Naive thymus-derived CD4-positive, alpha-beta T cell (primary cell): ENCODE measurements at regions of chr1 and their contacts with region 1.

Region 1: DNA sequence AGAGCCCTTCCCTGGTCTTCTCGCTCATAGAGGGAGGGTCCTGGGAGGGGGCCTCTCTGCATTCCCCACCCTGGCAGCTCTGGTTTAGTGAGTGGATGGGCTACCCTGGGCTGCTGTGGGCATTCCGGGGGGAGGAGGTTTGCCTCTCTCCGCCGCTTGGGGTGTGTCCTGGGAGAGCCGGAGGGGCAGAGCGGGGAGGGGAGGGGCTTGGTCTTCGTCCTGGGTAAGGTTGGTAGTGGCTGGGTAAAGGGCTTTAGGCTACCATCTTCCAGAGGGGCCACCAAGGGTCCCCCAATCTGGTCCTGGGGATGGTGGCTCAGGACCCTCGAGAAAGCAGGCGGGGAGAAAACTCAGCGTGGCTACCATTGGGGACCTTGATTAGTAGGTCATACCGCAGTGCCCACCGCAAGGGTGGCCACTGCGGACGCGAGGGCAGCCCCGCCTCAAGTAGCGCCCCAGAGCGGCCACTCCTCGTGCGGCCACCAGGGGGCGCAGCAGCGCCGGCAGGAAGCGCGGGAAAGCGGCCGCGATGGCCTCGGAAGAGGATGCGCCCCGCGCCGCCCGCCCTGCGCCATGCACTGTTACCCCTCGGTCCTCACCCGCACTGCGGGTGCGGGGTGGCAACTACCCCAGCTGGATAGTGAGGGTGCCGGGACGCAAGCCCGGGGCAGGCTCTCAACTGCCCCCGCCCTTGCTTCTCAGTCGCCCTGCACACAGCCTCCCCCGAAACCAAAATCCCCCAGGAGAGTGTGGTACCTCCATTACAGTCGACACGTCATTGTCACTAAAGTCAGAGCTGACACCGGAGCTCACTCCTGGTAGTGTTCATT is 44.1 kb upstream of the SLC25A33 start:
- DNase-seq: peak; percentile 30 to 80 (median 69)
- ATAC-seq: peak; percentile 86
- H3K4me3 ChIP-seq: peak overlapping the region; percentile 40
- H3K4me3 Mint-ChIP-seq: peak overlapping the region; percentile 33 to 78 (median 72)
- H3K27ac ChIP-seq: no peak overlapping the region
- H3K27ac Mint-ChIP-seq: peak overlapping the region in 1 of 9 donors; percentile 65
- H3K4me1 ChIP-seq: peaks cover 0 to 4% of the 10 kb centered on the region in 2 donors
- H3K4me1 Mint-ChIP-seq: peaks cover 0 to 11% (median 4%) of the 10 kb centered on the region in 7 donors
- H3K27me3 ChIP-seq: no peaks in the 10 kb centered on the region
- H3K27me3 Mint-ChIP-seq: peaks cover 0 to 35% (median 0%) of the 10 kb centered on the region in 5 donors

Region 2: GRCh38 chr1:9145021-9145668 is 350.0 kb before region 1 on chr1:
- CTCF ChIA-PET with region 1: no interaction called
- POLR2A ChIA-PET with region 1: no interaction called
- intact Hi-C with region 1: loop called in 1 of 2 experiments (anchors 1 kb)
- DNase-seq: no peak
- ATAC-seq: no peak
- H3K4me3 ChIP-seq: no peak overlapping the region
- H3K4me3 Mint-ChIP-seq: no peak overlapping the region
- H3K27ac ChIP-seq: no peak overlapping the region
- H3K27ac Mint-ChIP-seq: no peak overlapping the region
- H3K4me1 ChIP-seq: no peaks in the 10 kb centered on the region
- H3K4me1 Mint-ChIP-seq: peaks cover 0 to 7% (median 4%) of the 10 kb centered on the region in 7 donors
- H3K27me3 ChIP-seq: no peaks in the 10 kb centered on the region
- H3K27me3 Mint-ChIP-seq: no peaks in the 10 kb centered on the region

Region 3: DNA sequence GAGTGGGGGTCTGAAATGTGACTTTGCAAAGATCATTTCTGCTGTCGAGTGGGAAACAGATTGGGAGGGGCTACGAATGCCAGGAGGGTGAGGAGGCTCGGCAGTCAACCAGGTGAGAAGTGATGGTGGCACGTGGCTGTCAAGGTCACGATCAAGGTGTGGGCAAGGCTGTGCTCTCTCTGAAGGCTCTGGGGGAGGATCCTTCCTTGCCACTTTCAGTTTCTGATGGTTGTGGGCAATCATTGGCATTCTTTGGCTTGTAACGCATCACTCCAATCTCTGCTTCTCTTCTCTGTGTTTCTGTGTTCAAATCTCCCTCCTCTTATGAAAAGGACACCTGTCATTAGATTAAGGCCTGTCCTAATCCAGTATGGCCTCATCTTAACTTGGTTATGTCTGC is 208.6 kb before region 1 on chr1:
- CTCF ChIA-PET with region 1: interaction called, 45 read pairs
- POLR2A ChIA-PET with region 1: interaction called, 4 read pairs
- intact Hi-C with region 1: loop called (anchors 1 kb)
- DNase-seq: no peak
- ATAC-seq: no peak
- H3K4me3 ChIP-seq: no peak overlapping the region
- H3K4me3 Mint-ChIP-seq: no peak overlapping the region
- H3K27ac ChIP-seq: no peak overlapping the region
- H3K27ac Mint-ChIP-seq: peak overlapping the region in 2 of 9 donors; percentile 2 to 21
- H3K4me1 ChIP-seq: peaks cover 19 to 24% of the 10 kb centered on the region in 2 donors
- H3K4me1 Mint-ChIP-seq: peaks cover 6 to 48% (median 39%) of the 10 kb centered on the region in 7 donors
- H3K27me3 ChIP-seq: no peaks in the 10 kb centered on the region
- H3K27me3 Mint-ChIP-seq: no peaks in the 10 kb centered on the region

Region 4: GRCh38 chr1:9539165-9539828 is 44.2 kb after region 1 on chr1 and contains the start of gene SLC25A33:
- CTCF ChIA-PET with region 1: interaction called, 3 read pairs
- POLR2A ChIA-PET with region 1: no interaction called
- intact Hi-C with region 1: loop called in 1 of 2 experiments (anchors 1 kb)
- DNase-seq: peak; percentile 92 to 99 (median 95)
- ATAC-seq: peak; percentile 99
- H3K4me3 ChIP-seq: peak within 1 kb of the TSS; percentile 58
- H3K4me3 Mint-ChIP-seq: peak within 1 kb of the TSS; percentile 86 to 93 (median 90)
- H3K27ac ChIP-seq: peak within 1 kb of the TSS; percentile 73
- H3K27ac Mint-ChIP-seq: peak within 1 kb of the TSS; percentile 85 to 97 (median 91)
- H3K4me1 ChIP-seq: peaks cover 5 to 8% of the 10 kb centered on the region in 2 donors
- H3K4me1 Mint-ChIP-seq: peaks cover 18 to 38% (median 31%) of the 10 kb centered on the region in 7 donors
- H3K27me3 ChIP-seq: no peaks in the 10 kb centered on the region
- H3K27me3 Mint-ChIP-seq: no peaks in the 10 kb centered on the region
- total RNA-seq, gene SLC25A33: 2.5 to 5.8 (median 3.9) TPM

Region 5: GRCh38 chr1:9573723-9574122 is 78.6 kb after region 1 on chr1:
- CTCF ChIA-PET with region 1: interaction called, 34 read pairs
- POLR2A ChIA-PET with region 1: no interaction called
- intact Hi-C with region 1: loop called (anchors 1 kb)
- DNase-seq: peak in 3 of 9 donors; percentile 29 to 44 (median 33)
- ATAC-seq: no peak
- H3K4me3 ChIP-seq: no peak overlapping the region
- H3K4me3 Mint-ChIP-seq: no peak overlapping the region
- H3K27ac ChIP-seq: no peak overlapping the region
- H3K27ac Mint-ChIP-seq: peak overlapping the region in 2 of 9 donors; percentile 23 to 36
- H3K4me1 ChIP-seq: no peaks in the 10 kb centered on the region
- H3K4me1 Mint-ChIP-seq: no peaks in the 10 kb centered on the region
- H3K27me3 ChIP-seq: no peaks in the 10 kb centered on the region
- H3K27me3 Mint-ChIP-seq: no peaks in the 10 kb centered on the region

Region 6: DNA sequence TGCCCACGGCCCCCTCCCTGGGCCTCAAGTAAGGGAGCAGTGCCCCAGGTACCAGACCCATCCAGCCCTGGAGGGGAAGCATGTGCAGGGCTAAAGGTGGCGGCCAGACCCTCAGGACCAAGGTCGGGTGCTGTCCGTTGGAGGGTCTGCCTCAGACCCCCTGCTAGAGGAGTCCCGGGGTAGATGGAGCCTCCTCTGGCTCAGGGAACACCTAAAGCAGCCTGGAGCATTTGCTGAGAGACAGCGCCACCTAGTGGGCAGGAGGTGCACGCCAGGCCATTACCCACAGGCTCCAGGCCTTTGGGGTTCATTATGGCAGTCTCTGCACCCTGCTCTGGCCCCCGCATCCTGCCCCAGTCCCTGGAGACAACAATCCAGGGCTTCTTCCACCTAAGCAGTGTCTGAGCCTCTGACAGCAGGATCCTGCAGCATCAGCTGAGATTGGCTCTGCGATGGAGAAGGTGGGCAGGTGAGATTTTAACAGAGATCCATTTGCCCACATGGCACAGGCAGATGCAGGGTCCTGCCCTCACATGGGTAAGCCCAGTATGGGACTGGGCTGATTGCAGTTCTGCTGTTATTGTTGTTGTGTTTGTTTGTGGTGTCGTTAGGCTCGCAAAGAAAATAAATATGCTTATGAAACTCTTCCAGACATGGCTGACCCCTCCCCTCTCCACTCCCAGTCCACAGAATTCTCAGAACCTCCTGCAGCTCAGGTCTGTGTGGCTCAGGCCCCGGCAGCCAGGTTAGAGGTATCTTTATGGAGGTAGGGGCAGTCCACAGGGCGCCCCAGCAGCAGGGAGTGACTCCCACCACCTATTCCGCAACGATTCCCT is 372.5 kb after region 1 on chr1:
- CTCF ChIA-PET with region 1: interaction called, 3 read pairs
- POLR2A ChIA-PET with region 1: no interaction called
- intact Hi-C with region 1: loop called (anchors 1 kb)
- DNase-seq: peak; percentile 70 to 90 (median 84)
- ATAC-seq: peak; percentile 96
- H3K4me3 ChIP-seq: no peak overlapping the region
- H3K4me3 Mint-ChIP-seq: no peak overlapping the region
- H3K27ac ChIP-seq: no peak overlapping the region
- H3K27ac Mint-ChIP-seq: no peak overlapping the region
- H3K4me1 ChIP-seq: no peaks in the 10 kb centered on the region
- H3K4me1 Mint-ChIP-seq: peaks cover 0 to 7% (median 3%) of the 10 kb centered on the region in 7 donors
- H3K27me3 ChIP-seq: no peaks in the 10 kb centered on the region
- H3K27me3 Mint-ChIP-seq: no peaks in the 10 kb centered on the region